ENCODE measurements at regions of chr2 and their contacts with region 1.

Region 1: DNA sequence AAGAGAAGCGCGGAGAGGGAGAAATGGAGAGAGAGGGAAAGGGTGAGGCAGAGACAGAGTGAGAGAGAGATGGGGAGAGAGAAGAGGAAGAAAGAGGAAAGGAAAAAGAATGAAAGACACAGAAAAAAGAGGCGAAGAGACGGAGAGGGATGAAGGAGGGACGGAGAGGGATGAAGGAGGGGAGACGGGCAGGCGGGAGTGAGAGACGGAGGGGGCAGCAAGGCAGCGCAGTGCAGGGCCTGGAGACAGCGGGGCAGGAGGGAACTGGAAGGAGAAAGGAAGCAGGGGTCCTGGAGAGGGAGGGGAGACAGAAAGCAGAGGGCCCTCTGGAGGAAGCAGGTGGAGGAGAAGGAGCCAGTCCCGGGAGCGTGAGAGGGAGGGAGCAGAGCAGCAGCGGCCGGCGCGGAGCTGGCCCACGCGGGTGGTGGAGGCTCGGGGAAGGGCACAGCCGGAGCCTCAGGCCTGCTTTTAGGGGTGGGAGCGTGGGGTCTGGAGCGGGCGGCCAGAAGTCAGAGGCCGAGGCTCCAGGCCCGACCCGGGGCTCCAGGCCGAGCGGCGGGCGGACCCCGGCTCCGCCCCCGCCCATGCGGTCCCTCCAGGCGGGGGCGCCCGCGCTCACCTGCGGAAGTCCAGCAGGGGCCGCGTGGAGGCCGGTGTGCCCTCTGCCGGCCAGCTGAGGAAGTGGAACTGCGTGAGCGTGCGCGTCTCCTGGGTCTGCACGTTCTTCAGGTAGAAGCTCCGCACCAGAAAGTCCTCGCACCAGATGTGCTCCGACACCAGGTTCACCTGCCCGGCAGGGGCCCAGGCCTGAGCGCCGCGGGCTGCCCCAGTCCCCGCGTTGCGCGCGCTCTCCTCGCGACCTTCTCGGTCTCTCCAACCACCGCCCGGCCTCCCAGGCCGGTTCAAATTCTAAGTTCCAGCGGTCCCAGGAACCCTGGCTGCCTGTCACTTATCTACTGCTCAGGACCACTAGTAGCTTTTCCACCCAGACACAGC is 14.5 kb downstream of the PTPRN start:
- DNase-seq: peak; percentile 79
- H3K4me3 Mint-ChIP-seq: peak overlapping the region; percentile 68
- H3K27ac Mint-ChIP-seq: peak overlapping the region; percentile 40
- H3K4me1 Mint-ChIP-seq: peaks cover 17% of the 10 kb centered on the region
- H3K27me3 Mint-ChIP-seq: peaks cover 2% of the 10 kb centered on the region
- CTCF ChIP-seq: peak; percentile 99

Region 2: GRCh38 chr2:219160186-219161017 is 134.3 kb before region 1 on chr2 and contains the start of gene NHEJ1:
- CTCF ChIA-PET with region 1: interaction called, 38 read pairs
- POLR2A ChIA-PET with region 1: interaction called, 11 read pairs
- intact Hi-C with region 1: loop called (anchors 1 kb)
- DNase-seq: peak; percentile 95
- H3K4me3 Mint-ChIP-seq: peak within 1 kb of the TSS; percentile 77
- H3K27ac Mint-ChIP-seq: peak within 1 kb of the TSS; percentile 37
- H3K4me1 Mint-ChIP-seq: peaks cover 14% of the 10 kb centered on the region
- H3K27me3 Mint-ChIP-seq: no peaks in the 10 kb centered on the region
- CTCF ChIP-seq: peak; percentile 96
- total RNA-seq, gene NHEJ1: 7.5 and 11.5 TPM in 2 replicates

Region 3: DNA sequence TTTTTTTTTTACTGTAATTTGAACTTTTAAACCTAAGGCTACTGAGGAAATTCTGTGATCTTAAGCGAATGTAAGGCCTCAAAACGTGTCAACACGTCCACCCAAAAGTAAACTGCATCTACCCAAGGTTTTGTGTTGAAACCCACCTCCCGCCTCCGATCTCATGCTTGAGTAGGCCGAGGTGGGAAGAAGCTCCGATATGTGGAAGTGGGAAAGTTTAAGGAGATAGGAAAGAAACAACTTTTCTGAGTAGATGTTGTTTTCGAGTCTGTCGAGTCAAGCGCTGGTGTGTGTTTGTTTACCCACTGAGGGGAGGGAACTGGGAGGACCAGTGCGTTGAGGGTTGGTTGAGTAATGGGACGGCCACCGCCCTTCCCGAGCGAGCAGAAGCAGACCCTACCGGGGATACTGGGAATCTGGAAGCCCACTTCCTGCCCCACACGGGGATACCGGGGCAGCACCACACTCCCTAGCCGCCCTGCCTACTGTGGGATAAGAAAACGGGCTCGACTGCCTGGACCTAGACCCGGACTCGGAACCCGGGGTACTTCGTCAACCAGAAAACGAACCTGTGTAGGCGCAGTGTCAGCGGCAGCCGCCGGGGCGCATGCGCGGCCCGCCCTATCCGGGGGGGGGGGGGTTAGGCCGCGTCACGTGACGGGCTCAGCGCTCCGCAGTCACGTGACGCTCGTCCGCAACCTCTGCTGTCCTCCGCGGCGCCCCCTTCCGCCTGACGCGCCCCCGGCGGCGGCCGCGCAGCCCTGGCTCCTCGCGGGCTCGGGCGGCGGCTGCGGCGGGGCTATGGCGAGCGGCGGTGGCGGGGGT is 116.9 kb before region 1 on chr2 and contains the start of gene RETREG2:
- CTCF ChIA-PET with region 1: interaction called, 69 read pairs
- POLR2A ChIA-PET with region 1: interaction called, 38 read pairs
- intact Hi-C with region 1: no loop called
- DNase-seq: peak; percentile 90
- H3K4me3 Mint-ChIP-seq: peak within 1 kb of the TSS; percentile 82
- H3K27ac Mint-ChIP-seq: peak within 1 kb of the TSS; percentile 93
- H3K4me1 Mint-ChIP-seq: no peaks in the 10 kb centered on the region
- H3K27me3 Mint-ChIP-seq: no peaks in the 10 kb centered on the region
- CTCF ChIP-seq: peak; percentile 32
- total RNA-seq, gene RETREG2: 49.3 and 64.5 TPM in 2 replicates

Region 4: DNA sequence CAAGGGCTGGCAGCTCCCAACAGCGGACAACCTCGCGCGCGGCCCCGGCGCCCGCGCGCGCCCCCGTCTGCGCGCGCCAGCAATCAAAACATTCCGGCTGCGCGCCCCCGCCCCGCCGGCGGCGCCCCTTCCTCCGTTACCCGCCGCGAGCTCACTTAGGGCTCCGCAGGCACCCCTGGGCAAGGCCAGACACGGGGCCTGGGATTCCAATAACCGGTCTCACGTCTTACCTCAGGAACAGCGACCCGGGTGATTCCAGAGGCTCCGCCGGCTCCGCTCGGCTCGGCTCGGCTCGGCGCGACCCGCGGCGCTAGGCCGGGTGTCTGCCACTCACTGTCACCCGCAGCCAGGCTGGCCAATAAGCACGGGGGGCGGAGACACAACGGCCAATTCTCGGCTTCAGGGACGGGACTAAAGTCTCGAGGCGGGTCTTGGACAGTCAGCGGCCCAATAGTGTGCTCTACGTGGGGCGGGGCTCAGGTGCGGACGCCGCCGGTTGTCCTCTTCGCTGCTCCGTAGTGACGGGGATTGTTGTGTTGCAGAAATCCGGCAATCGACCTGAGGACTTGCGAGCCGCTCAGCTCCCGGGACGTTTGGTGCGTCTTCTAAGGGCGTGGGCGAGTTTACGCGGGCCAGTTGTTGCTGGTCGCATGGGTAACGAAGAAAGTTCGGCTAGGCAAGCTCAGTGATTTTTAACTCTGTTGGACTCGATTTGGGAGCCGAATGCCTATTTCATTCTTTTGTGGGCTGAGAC is 65.2 kb before region 1 on chr2 and contains the starts of genes ANKZF1 and ATG9A:
- CTCF ChIA-PET with region 1: interaction called, 41 read pairs
- POLR2A ChIA-PET with region 1: interaction called, 32 read pairs
- intact Hi-C with region 1: loop called (anchors 2 kb)
- DNase-seq: peak; percentile 100
- H3K4me3 Mint-ChIP-seq: peak within 1 kb of the TSS; percentile 100
- H3K27ac Mint-ChIP-seq: peak within 1 kb of the TSS; percentile 99
- H3K4me1 Mint-ChIP-seq: peaks cover 12% of the 10 kb centered on the region
- H3K27me3 Mint-ChIP-seq: no peaks in the 10 kb centered on the region
- CTCF ChIP-seq: no peak
- total RNA-seq, gene ANKZF1: 45.5 and 45.6 TPM in 2 replicates
- total RNA-seq, gene ATG9A: 52.1 and 60.8 TPM in 2 replicates

Region 5: GRCh38 chr2:219253753-219254590 is 40.7 kb before region 1 on chr2 and contains the start of gene TUBA4A:
- CTCF ChIA-PET with region 1: interaction called, 123 read pairs
- POLR2A ChIA-PET with region 1: interaction called, 21 read pairs
- intact Hi-C with region 1: loop called (anchors 5 kb)
- DNase-seq: peak; percentile 84
- H3K4me3 Mint-ChIP-seq: peak within 1 kb of the TSS; percentile 91
- H3K27ac Mint-ChIP-seq: peak within 1 kb of the TSS; percentile 51
- H3K4me1 Mint-ChIP-seq: peaks cover 35% of the 10 kb centered on the region
- H3K27me3 Mint-ChIP-seq: no peaks in the 10 kb centered on the region
- CTCF ChIP-seq: no peak
- total RNA-seq, gene TUBA4A: 37.2 and 80.5 TPM in 2 replicates

Region 6: DNA sequence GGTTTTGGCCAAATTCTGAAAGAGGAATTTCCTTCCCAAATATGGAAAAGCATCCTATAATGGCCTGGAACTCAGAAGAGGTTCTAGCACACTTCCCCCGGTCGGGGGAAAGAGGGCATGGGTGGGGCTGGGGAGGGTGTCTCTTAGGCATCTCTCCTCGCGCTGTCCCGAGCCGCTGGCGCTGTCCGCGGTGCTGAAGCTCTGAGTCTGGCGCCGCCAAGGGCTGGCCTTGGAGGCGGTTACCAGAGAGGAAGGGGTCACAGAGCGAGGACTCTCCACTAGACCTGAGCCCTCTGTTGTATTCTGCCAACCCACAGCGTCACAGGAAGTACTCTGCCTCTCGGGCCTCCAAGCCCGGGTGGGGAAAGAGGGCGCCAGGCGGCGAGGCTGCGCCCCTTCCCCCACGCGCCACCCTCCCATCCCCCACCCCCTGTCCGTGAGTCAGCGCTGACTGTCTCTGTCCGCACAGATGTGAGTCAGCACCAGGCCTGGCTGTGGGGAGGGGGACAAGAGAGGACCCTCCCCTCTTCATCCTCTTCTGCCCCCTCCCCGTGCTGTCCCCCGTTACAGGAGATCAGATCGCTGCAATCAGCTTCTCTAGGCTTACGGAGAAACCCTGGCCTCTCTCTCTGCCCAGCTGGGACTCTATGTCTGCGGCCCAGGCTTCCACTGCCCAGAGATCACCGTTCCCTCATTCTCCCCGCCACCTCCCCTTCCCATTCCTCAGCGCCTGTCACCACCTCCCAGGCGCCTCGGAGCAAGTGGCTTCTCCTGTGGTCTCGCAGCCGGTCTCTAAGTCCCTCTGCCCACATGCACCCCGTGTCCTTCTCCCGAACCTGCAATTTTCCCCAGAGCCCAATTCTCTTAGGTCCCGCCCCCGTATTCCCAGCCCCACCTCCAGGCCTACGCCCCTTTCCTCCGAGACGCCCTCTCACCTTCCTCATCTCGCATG is 13.8 kb after region 1 on chr2:
- CTCF ChIA-PET with region 1: interaction called, 15 read pairs
- POLR2A ChIA-PET with region 1: no interaction called
- intact Hi-C with region 1: no loop called
- DNase-seq: peak; percentile 76
- H3K4me3 Mint-ChIP-seq: no peak overlapping the region
- H3K27ac Mint-ChIP-seq: no peak overlapping the region
- H3K4me1 Mint-ChIP-seq: no peaks in the 10 kb centered on the region
- H3K27me3 Mint-ChIP-seq: peaks cover 57% of the 10 kb centered on the region
- CTCF ChIP-seq: no peak

Measured in MCF 10A (cell line).